PC-3 (cell line): ENCODE measurements at regions of chr2 and their contacts with region 1.

Region 1: GRCh38 chr2:148063633-148064032 is 42.7 kb downstream of the MBD5 start:
- DNase-seq: no peak
- ATAC-seq: no peak
- H3K4me3 ChIP-seq: no peak overlapping the region
- H3K27ac ChIP-seq: no peak overlapping the region
- H3K4me1 ChIP-seq: no peaks in the 10 kb centered on the region
- H3K27me3 ChIP-seq: no peaks in the 10 kb centered on the region
- CTCF ChIP-seq: no peak

Region 2: DNA sequence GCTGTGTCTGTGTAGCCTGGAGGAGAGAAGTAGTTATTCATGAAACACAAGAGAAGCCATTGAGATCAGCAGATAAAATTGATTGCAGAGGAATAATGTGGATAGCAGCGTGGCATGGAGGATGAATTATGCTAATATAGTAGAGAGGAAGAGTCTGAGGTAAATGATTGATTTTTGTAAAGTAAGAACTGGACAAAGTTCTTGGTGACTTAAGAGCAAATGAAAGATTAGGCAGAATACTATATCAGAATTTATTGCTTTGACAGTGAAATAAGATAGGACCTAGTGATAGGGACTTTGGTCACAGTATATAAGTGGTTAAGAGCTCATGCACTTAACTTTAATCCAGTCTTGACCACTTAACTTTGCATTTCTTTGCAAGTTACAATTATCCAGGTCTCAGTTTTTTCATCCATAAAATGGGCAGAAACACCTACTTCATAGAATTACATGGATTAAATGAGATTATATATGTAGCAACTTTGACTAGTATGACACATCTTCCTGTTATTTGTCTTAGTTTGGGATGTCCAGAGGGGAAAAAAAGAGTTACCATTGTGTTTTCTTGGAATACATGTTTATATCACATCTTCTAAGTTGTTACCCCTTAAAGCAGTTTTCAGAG is 189.7 kb before region 1 on chr2:
- CTCF ChIA-PET with region 1: no interaction called
- POLR2A ChIA-PET with region 1: no interaction called
- intact Hi-C with region 1: no loop called
- DNase-seq: no peak
- ATAC-seq: no peak
- H3K4me3 ChIP-seq: no peak overlapping the region
- H3K27ac ChIP-seq: no peak overlapping the region
- H3K4me1 ChIP-seq: no peaks in the 10 kb centered on the region; the same call in 1 of the 2 replicates
- H3K27me3 ChIP-seq: no peaks in the 10 kb centered on the region
- CTCF ChIP-seq: no peak

Region 3: GRCh38 chr2:148102641-148103040 is 39.0 kb after region 1 on chr2:
- CTCF ChIA-PET with region 1: no interaction called
- POLR2A ChIA-PET with region 1: no interaction called
- intact Hi-C with region 1: loop called (anchors 5 kb)
- DNase-seq: no peak
- ATAC-seq: no peak
- H3K4me3 ChIP-seq: no peak overlapping the region
- H3K27ac ChIP-seq: no peak overlapping the region
- H3K4me1 ChIP-seq: no peaks in the 10 kb centered on the region
- H3K27me3 ChIP-seq: no peaks in the 10 kb centered on the region
- CTCF ChIP-seq: no peak